Colonic mucosa (tissue), 4 donors: ENCODE measurements at regions of chr20 and their contacts with region 1.

Region 1: DNA sequence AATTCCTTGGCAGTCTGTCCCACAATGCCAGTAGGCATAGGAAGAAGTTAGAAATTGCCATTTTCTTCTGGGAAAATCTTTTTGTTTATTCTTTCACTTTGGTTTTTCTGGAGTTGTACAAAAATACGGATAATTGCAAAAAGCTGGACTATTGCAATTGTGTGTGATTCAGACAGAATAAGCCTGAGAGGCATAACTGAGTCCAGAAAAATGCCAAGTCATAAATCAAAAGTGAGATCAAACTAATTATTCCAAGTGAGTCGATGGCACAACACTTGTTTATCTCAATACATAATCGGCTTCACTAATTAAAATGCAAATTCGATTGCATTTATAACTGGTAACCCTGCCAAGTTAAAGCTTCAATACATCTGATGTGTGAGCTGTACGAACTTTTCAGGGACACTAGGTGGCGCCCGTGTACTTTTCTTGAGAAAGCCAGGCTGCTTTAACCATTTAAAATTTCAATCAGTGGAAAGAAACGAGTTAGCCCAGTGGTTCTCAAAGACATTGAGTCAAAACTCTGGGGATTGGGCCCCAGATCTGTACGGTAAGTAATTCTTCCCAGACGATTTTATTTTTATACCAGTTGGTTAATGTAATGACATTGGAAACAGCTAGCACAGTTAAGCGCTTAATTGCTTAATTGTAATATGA is 102.6 kb downstream of the LAMP5 start:
- DNase-seq: peak; percentile 41
- H3K4me3 ChIP-seq: no peak overlapping the region
- H3K27ac ChIP-seq: no peak overlapping the region
- H3K4me1 ChIP-seq: no peaks in the 10 kb centered on the region
- H3K27me3 ChIP-seq: no peaks in the 10 kb centered on the region
- CTCF ChIP-seq: peak; percentile 79

Region 2: GRCh38 chr20:9912858-9913434 is 296.0 kb after region 1 on chr20:
- intact Hi-C with region 1: loop called (anchors 2 kb)
- DNase-seq: peak; percentile 27
- H3K4me3 ChIP-seq: no peak overlapping the region
- H3K27ac ChIP-seq: no peak overlapping the region
- H3K4me1 ChIP-seq: no peaks in the 10 kb centered on the region
- H3K27me3 ChIP-seq: no peaks in the 10 kb centered on the region
- CTCF ChIP-seq: peak; percentile 73

Region 3: GRCh38 chr20:9966966-9967365 is 350.0 kb after region 1 on chr20:
- intact Hi-C with region 1: loop called (anchors 5 kb)
- DNase-seq: no peak
- H3K4me3 ChIP-seq: no peak overlapping the region
- H3K27ac ChIP-seq: no peak overlapping the region
- H3K4me1 ChIP-seq: no peaks in the 10 kb centered on the region
- H3K27me3 ChIP-seq: no peaks in the 10 kb centered on the region
- CTCF ChIP-seq: no peak

Region 4: DNA sequence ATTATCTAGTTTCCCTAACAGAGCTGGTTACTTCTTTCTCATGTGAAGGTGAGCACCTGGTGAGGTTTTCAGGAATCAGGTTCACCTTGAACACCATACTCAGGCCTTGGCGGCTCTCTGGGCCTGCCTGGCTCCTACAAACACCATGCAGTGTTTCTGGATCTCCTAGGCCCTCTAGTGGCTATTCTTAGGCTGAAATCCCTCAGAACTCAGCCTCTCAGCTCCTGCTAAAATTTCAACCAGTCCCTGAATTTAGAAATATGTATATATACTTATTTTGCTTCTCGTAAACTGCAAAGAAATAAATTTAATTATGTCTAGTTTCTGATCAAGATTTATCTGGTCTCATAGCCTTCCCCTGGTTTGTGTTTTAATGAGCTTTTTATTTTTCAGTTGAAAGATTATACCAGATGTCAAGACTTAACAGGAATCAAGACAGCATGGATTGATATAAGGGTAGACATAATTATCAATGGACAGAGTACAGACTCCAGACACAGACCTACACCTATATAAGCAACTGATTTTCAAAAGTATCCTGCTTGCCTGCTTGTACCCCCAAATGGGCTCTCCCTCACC is 473.7 kb after region 1 on chr20:
- intact Hi-C with region 1: loop called (anchors 5 kb)
- DNase-seq: peak; percentile 36
- H3K4me3 ChIP-seq: no peak overlapping the region
- H3K27ac ChIP-seq: no peak overlapping the region
- H3K4me1 ChIP-seq: no peaks in the 10 kb centered on the region
- H3K27me3 ChIP-seq: no peaks in the 10 kb centered on the region
- CTCF ChIP-seq: peak; percentile 71

Region 5: GRCh38 chr20:10427060-10427692 is 810.2 kb after region 1 on chr20:
- intact Hi-C with region 1: loop called (anchors 5 kb)
- DNase-seq: peak; percentile 50
- H3K4me3 ChIP-seq: no peak overlapping the region
- H3K27ac ChIP-seq: no peak overlapping the region
- H3K4me1 ChIP-seq: peaks cover 3% of the 10 kb centered on the region
- H3K27me3 ChIP-seq: no peaks in the 10 kb centered on the region
- CTCF ChIP-seq: peak; percentile 77